Lower leg skin (tissue), 4 donors: ENCODE measurements at regions of chr16 and their contacts with region 1.

Region 1: DNA sequence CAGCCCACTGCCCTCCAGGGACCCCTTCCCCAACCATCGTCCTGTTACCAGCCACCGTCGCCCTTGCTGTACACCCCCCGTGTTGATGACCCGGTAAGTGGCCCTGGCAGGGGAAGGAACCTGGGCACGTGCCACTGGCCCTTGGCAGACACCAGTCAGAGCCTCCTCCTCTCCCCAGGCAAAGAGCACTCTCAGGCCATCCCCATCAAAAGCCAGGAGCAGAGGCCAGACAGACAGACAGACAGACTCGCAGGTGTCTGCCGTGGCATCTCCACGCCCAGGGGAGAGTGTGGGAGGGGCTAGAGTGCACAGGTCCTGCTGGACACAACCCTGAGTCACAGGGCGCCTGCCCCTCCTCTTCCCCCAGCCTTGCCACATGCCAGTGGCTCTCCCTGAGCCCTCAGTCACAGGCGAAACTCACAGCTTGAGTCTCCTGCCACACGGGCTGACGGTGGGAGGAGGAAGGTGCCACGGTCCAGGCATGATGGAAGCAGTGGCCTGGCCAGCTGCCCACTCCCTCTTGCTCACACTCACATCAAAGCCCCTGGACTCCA is 7.8 kb downstream of the CLCN7 start:
- DNase-seq: no peak
- H3K4me3 ChIP-seq: no peak overlapping the region
- CTCF ChIP-seq: no peak
- POLR2A ChIP-seq: no peak

Region 2: DNA sequence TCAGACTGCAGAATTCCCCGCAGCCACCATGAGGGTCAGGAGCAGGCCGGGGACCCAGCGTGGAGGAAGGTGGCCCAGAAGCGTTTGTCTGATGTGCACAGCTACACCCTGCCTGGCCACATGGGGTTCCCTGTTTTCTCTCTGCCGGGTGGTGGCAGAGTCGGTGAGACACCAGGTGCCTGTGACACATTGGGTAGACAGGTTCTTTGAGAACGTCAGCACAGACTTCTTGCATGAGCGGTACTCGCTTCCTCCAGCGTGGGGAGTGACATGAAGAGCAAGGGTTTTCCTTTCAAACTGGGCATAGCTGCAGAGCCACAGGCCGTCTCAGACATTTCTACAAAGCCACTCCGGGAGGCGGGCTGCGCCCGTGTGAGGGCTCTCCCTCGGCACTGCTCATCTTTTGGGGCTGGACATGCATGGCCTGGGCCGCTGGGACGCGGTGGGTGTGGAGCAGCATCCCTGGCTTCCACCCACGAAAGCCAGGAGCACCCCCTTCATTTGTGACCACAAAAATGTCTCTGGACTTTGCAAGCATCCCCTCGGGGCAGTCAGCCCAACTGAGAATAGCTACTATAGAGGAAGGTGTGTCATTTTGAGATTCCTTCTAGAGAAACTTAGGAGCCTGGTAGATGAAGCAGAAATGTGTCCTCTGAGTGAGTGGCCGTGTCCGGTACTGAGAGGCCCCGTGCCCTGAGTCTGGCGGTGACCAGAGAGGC is 278.3 kb after region 1 on chr16:
- intact Hi-C with region 1: loop called (anchors 10 kb)
- DNase-seq: peak in 1 of 2 donors; percentile 76
- H3K4me3 ChIP-seq: no peak overlapping the region
- CTCF ChIP-seq: no peak
- POLR2A ChIP-seq: no peak